ENCODE measurements at regions of chr11 and their contacts with region 1.

Region 1: DNA sequence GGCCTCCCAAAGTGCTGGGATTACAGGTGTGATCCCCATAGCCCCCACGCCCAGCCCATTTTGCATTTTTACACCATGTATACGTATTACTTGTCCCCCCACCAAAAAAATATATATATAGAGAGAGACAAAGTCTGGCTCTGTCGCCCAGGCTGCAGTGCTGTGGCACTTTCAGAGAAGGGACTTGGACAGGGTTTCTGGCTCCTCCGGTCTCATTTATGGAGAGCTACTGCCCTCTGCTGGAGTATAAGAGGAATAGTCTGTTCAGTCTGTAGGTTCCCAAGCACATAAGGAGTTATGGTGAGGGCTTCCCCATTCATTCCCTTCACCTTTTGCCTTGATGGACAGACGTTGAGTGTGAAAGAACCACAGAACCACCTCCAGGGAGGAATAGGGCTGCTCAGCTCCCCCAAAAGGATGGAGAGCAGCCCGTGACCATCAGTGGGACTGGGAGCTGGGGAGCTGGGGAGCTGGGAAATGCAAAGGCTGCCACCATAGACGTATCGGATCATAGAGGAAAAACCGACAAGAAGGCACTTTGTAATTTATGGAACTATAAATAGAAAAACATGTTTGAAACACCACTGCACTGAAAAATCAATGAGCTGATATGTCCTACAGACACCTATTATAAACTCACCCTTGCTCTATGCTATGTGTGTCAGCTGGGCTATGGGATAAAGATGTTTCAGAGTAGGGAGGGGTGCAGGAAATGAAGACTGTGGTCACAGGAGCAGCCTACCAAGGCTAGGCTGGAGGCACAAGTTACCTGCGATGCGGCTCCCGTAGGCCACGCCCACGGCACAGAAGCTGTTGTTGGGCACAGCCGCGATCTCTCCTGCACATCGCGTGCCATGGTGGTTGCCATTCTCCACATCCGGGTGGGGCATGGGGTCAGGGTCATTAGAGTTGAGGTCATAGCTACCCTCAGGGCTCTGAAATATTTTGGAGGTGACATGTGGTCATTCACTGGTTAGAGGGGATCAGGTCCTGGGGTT is 5.2 kb downstream of the PCSK7 start:
- DNase-seq: peak; percentile 45
- H3K4me3 Mint-ChIP-seq: no peak overlapping the region
- H3K27ac Mint-ChIP-seq: peak overlapping the region; percentile 33
- H3K4me1 Mint-ChIP-seq: peaks cover 29% of the 10 kb centered on the region
- H3K27me3 Mint-ChIP-seq: no peaks in the 10 kb centered on the region

Region 2: DNA sequence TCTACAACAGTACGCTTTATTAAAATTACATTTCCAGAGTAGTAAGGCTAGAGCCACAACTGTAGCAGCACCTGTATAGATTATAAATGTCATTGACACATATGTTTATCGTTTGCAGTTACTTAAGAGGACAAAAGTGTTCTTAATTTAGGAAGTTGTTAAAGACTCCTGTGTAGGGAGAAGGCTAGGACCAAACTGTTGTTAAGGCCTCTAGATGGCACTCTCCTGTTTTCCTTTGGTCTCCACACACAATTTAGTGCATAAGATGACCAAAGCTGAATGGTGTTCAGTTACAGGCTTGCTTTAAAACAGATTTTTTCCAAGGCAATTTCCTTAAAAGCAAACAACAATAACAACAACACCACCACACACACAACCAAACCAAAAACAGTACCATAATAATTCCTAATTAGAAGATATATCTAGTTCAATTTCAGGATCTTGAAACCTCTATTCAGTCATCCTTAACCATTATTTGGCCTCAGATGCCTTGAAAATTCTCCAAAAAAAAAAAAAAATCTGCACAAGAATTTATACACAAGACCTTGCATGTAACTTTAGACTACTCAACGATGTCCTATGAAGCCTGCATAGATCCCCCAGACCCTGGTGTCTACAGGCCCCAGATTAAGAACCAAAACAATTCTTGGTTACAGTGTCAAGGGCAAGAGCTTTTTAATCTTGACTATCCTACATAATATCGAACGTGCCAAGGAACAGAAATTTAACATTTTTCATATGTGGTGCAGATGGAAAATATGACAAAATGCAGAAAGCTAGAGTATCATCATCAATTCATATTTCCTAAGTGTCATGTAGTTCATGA is 346.7 kb before region 1 on chr11:
- CTCF ChIA-PET with region 1: interaction called, 3 read pairs
- POLR2A ChIA-PET with region 1: no interaction called
- intact Hi-C with region 1: loop called (anchors 1 kb)
- DNase-seq: no peak
- H3K4me3 Mint-ChIP-seq: no peak overlapping the region
- H3K27ac Mint-ChIP-seq: no peak overlapping the region
- H3K4me1 Mint-ChIP-seq: peaks cover 28% of the 10 kb centered on the region
- H3K27me3 Mint-ChIP-seq: no peaks in the 10 kb centered on the region

Region 3: GRCh38 chr11:117171404-117172061 is 55.2 kb before region 1 on chr11:
- CTCF ChIA-PET with region 1: interaction called, 16 read pairs
- POLR2A ChIA-PET with region 1: no interaction called
- intact Hi-C with region 1: no loop called
- DNase-seq: no peak
- H3K4me3 Mint-ChIP-seq: no peak overlapping the region
- H3K27ac Mint-ChIP-seq: peak overlapping the region; percentile 4
- H3K4me1 Mint-ChIP-seq: peaks cover 5% of the 10 kb centered on the region
- H3K27me3 Mint-ChIP-seq: no peaks in the 10 kb centered on the region

Region 4: GRCh38 chr11:117178210-117179034 is 48.3 kb before region 1 on chr11 and contains the start of gene SIDT2:
- CTCF ChIA-PET with region 1: interaction called, 61 read pairs
- POLR2A ChIA-PET with region 1: interaction called, 22 read pairs
- intact Hi-C with region 1: loop called (anchors 1 kb)
- DNase-seq: peak; percentile 94
- H3K4me3 Mint-ChIP-seq: peak within 1 kb of the TSS; percentile 92
- H3K27ac Mint-ChIP-seq: peak within 1 kb of the TSS; percentile 79
- H3K4me1 Mint-ChIP-seq: peaks cover 29% of the 10 kb centered on the region
- H3K27me3 Mint-ChIP-seq: no peaks in the 10 kb centered on the region
- total RNA-seq, gene SIDT2: 21.5 to 26.0 TPM

Region 5: GRCh38 chr11:117210620-117211019 is 16.1 kb before region 1 on chr11:
- CTCF ChIA-PET with region 1: interaction called, 13 read pairs
- POLR2A ChIA-PET with region 1: no interaction called
- intact Hi-C with region 1: no loop called
- DNase-seq: no peak
- H3K4me3 Mint-ChIP-seq: no peak overlapping the region
- H3K27ac Mint-ChIP-seq: no peak overlapping the region
- H3K4me1 Mint-ChIP-seq: peaks cover 2% of the 10 kb centered on the region
- H3K27me3 Mint-ChIP-seq: no peaks in the 10 kb centered on the region